Right ventricle myocardium superior (tissue), 1 donor: ENCODE measurements at regions of chr5 and their contacts with region 1.

Region 1: DNA sequence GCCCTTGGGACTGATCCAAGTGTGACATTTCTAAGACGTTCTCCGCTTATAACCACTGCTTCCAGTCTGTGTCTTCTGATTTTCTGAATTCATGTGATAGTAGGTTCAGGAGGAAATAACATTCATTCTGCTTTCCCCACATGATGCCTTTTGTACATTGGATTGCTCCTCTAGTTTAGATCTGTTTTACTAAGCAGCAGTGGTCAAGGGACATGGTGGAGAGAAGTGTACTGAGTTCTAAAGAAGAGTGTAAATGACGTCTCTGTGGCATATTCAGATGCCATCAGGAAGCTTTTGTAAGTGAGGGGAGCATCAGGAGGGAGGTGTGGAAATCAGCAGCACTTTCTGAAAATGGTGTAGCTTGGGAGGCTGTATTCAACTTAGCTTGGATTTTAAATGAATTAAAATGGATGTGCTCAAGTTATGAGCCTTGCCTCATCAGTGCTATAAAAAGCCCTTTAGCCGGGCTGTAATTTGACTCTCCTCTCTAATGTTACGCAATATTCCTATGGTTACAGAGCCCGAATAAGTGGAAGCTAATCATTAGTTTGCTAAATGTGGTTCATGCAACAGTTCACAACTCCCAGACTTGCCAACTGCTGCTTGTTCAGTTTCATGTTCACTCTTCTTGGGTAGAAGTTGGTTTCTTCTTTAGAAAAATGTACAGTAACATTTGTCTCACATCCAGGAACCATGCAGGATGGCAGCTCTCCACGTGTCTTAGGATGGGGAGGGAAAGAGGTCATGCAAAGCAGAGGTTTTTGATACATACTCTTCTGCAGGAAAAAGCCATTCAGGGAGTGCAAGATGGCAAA is 281.3 kb downstream of the ARHGAP26 start:
- DNase-seq: no peak
- ATAC-seq: peak; percentile 97

Region 2: GRCh38 chr5:143134900-143135299 is 83.4 kb after region 1 on chr5:
- intact Hi-C with region 1: loop called (anchors 10 kb)
- DNase-seq: no peak
- ATAC-seq: no peak